GM13976 (cell line): ENCODE measurements at regions of chr4 and their contacts with region 1.

Region 1: GRCh38 chr4:151604238-151604637 is 156.6 kb downstream of the GATB start:
- DNase-seq: no peak
- CTCF ChIP-seq: peak; percentile 26

Region 2: GRCh38 chr4:151147000-151147399 is 457.2 kb before region 1 on chr4:
- in situ Hi-C with region 1: loop called (anchors 25 kb)
- DNase-seq: no peak
- CTCF ChIP-seq: no peak

Region 3: DNA sequence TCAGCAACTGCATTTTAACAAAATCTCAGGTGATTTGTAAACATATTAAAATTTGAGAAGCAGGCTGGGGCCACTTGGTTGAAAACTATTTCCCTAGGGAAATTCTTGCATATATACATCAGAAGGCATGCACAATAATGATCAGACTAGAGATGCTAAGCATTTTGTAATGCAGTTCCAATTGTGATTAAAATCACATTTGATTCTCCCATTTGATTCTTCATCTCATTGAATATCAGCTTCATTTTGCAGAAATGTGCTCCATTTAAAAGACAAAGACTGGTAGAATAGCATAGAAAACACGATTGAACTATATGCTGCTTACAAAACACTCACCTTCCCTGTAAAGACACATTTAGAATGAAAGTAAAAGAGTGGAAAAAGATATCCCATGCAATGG is 227.7 kb before region 1 on chr4:
- in situ Hi-C with region 1: loop called (anchors 10 kb)
- DNase-seq: no peak
- CTCF ChIP-seq: no peak